Right ventricle myocardium inferior (tissue), 1 donor: ENCODE measurements at regions of chr1 and their contacts with region 1.

Region 1: GRCh38 chr1:205396967-205397616 is 24.8 kb downstream of the LEMD1 start:
- DNase-seq: no peak
- ATAC-seq: peak; percentile 79

Region 2: DNA sequence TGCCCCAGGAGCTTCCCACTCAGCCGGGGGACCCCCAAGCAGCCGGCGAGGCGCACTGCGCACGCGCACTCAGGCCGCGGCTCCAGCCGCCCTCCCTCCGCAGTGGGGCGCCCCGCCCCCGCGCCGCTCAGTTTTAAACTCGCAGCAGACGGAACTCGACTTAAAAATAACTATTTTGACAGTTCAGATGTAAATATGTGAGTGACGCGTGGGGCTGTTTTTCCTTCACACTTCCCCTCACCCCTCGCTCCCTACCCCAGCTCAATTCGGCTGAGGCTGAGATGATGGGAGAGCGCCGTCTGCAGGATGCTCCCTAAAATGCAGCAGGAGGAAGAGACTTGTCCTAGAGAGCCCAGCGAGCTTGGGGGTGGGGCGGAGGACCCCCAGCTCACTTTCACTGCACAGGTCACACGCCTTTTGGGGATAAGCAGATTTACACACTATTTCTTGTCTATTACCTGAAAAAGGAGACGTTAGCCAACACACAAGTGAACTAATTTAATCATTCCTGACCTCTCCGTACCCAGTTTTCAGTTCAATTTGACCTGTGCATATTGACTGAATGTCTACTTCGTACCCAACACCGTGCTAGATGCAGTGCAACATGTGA is 33.7 kb after region 1 on chr1:
- intact Hi-C with region 1: loop called (anchors 2 kb)
- DNase-seq: no peak
- ATAC-seq: peak; percentile 83

Region 3: DNA sequence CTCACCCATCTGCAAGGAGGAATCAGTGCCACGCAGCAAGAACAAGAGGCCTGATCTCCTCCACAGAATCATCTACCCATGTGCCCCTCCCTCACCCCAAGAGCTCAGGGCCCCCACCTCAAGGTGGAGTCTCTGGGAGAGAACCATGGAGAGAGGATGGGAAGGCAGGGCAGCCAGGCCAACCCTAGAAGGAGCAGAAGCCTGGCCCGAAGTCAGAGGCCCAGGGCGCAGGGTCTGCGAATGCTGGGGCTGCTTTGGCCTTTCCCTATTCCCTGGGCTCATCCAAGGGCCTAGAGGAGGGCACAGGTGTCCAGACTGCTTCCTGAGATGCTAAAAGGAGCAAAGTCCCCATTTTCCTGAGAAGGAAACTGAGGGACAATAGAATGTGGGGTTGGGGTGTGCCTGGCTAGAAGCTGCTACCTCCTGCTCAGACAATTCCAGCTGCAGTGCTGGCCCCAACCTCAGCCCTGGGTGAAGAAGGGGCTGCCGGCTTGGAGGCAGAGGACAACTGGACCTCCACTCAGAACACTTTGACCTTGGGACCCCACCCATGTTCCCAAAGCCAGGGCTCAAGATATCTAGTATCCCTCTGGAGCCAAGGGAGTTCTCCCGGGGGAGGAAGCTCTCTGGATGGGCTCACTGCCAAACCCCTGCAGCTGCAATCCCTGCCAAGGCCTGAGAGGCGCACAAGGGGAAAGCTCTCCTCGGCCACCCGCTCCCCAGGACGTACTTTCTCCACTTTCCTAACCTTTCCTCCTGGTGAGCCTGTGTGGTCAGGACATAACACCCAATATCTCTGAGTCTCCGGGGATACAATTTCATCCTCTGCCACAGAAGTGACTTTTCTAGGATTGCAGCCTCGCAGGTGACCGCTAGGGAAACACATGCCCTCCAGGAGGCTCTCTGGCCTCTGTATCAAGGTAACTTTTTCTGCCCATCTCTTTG is 41.4 kb after region 1 on chr1:
- intact Hi-C with region 1: loop called (anchors 2 kb)
- DNase-seq: peak; percentile 89
- ATAC-seq: peak; percentile 83